PC-9 (cell line): ENCODE measurements at regions of chr6 and their contacts with region 1.

Region 1: GRCh38 chr6:2448820-2449571 is 203.6 kb upstream of the GMDS start:
- DNase-seq: peak; percentile 28 to 59
- H3K4me3 ChIP-seq: no peak overlapping the region
- H3K27ac ChIP-seq: no peak overlapping the region
- H3K4me1 ChIP-seq: no peaks in the 10 kb centered on the region
- H3K27me3 ChIP-seq: no peaks in the 10 kb centered on the region
- CTCF ChIP-seq: peak; percentile 78

Region 2: GRCh38 chr6:1596088-1596852 is 852.7 kb before region 1 on chr6:
- CTCF ChIA-PET with region 1: no interaction called
- POLR2A ChIA-PET with region 1: no interaction called
- intact Hi-C with region 1: loop called (anchors 2 kb)
- DNase-seq: peak; percentile 43 to 61
- H3K4me3 ChIP-seq: no peak overlapping the region
- H3K27ac ChIP-seq: no peak overlapping the region
- H3K4me1 ChIP-seq: no peaks in the 10 kb centered on the region
- H3K27me3 ChIP-seq: no peaks in the 10 kb centered on the region
- CTCF ChIP-seq: peak; percentile 88

Region 3: DNA sequence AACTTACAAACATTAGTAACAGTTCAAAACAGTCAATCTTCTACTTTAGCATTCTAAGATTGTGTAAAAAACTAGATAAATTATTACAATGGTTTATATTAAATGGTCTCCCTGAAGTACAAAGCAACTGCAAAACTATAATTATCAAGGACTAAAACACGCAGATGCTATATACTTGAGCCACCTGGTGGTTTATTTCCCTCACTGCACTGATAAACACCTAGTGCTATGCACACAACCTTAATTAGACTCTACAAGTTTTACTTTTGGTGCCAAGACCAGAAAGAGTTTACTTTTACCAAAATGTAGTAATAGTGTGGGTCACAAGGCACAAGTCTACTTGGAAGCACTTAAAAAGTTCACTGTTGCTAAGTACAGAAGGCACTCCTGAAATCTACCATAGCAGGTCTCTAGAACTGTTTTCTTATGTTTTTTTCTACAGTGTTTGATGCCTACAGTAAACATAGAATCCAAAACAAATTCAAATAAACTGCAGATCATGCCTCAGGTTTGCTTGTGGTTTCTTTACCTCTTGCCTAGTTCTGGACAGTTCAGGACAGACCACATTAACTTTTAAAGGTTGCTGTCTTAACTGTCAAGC is 252.8 kb before region 1 on chr6:
- CTCF ChIA-PET with region 1: no interaction called
- POLR2A ChIA-PET with region 1: no interaction called
- intact Hi-C with region 1: loop called (anchors 2 kb)
- DNase-seq: peak in 1 of 2 experiments; percentile 17
- H3K4me3 ChIP-seq: no peak overlapping the region
- H3K27ac ChIP-seq: no peak overlapping the region
- H3K4me1 ChIP-seq: peaks cover 9% of the 10 kb centered on the region; the same call in 1 of the 2 replicates
- H3K27me3 ChIP-seq: no peaks in the 10 kb centered on the region
- CTCF ChIP-seq: peak; percentile 73

Region 4: DNA sequence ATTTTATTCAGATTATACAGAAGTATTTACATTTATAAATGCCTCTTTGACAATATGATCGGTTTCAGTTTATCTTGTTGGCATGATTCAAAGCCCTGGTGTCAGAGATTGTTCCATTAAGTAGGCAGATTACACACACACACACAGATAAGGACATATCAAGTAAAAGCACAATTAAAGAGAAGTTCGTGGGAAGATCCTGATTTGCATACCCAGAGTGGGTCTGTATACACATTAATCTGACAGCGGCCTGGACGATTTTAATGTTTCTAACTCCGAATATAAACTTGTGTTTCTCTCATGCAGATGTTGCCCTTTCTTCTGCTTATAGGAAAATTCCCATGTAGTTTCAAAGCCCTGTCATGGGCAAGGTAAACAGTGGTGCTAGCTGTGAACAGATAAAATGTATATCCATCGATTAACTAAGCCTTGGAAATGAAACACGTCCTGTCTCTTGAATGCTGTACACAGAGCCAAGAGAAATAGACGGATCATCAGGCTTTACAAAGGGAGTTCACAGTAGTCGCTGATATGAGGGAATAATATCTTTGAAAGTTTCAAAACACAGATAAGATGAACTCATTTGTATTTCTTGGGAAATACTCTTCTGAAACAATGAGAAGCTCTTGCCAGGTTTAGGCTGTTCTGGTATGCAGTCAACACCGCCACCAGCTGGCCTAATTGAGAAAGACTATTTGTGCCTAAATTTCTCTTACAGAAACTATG is 95.4 kb before region 1 on chr6:
- CTCF ChIA-PET with region 1: interaction called, 5 read pairs
- POLR2A ChIA-PET with region 1: no interaction called
- intact Hi-C with region 1: loop called (anchors 2 kb)
- DNase-seq: peak; percentile 60 to 62
- H3K4me3 ChIP-seq: no peak overlapping the region
- H3K27ac ChIP-seq: no peak overlapping the region
- H3K4me1 ChIP-seq: peaks cover 6% of the 10 kb centered on the region; the same call in 1 of the 2 replicates
- H3K27me3 ChIP-seq: no peaks in the 10 kb centered on the region
- CTCF ChIP-seq: peak; percentile 79

Region 5: DNA sequence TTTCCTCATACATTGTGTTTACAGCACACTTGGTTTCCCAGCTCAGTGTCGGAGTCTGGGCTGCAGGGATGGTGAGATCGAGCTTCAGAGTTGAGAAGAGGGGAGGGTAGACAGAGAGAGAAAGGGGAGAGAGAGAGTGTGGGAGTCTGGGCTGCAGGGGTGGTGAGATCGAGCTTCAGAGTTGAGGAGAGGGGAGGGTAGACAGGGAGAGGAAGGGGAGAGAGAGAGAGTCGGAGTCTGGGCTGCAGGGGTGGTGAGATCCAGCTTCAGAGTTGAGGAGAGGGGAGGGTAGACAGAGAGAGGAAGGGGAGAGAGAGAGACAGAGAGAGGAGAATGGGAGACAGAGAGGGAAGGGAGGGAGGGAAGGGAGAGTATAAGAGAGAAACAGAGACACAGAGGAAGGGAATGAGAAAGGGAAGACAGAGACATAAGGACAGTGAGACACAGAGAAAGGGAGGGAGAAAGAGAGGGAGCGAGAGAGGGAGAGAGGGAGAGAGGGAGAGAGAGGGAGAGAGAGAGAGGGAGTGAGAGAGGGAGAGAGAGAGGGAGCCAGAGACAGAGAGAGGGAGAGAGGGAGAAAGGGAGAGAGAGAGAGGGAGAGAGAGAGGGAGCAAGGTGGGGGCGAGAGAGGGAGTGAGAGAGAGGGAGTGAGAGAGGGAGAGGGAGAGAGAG is 19.1 kb after region 1 on chr6:
- CTCF ChIA-PET with region 1: no interaction called
- POLR2A ChIA-PET with region 1: interaction called, 12 read pairs
- intact Hi-C with region 1: no loop called
- DNase-seq: no peak
- H3K4me3 ChIP-seq: no peak overlapping the region
- H3K27ac ChIP-seq: no peak overlapping the region
- H3K4me1 ChIP-seq: peaks cover 8% of the 10 kb centered on the region; the same call in 1 of the 2 replicates
- H3K27me3 ChIP-seq: no peaks in the 10 kb centered on the region
- CTCF ChIP-seq: no peak

Region 6: GRCh38 chr6:2695454-2696095 is 246.6 kb after region 1 on chr6:
- CTCF ChIA-PET with region 1: no interaction called
- POLR2A ChIA-PET with region 1: no interaction called
- intact Hi-C with region 1: loop called (anchors 10 kb)
- DNase-seq: no peak
- H3K4me3 ChIP-seq: no peak overlapping the region
- H3K27ac ChIP-seq: no peak overlapping the region
- H3K4me1 ChIP-seq: no peaks in the 10 kb centered on the region
- H3K27me3 ChIP-seq: no peaks in the 10 kb centered on the region
- CTCF ChIP-seq: peak; percentile 47